BJ (cell line): ENCODE measurements at regions of chr9 and their contacts with region 1.

Region 1: GRCh38 chr9:112029921-112030444 is 133.4 kb downstream of the UGCG start:
- DNase-seq: peak; percentile 51
- H3K4me3 ChIP-seq: no peak overlapping the region
- H3K27me3 ChIP-seq: no peaks in the 10 kb centered on the region
- CTCF ChIP-seq: no peak

Region 2: GRCh38 chr9:113221003-113221799 is 1191.2 kb after region 1 on chr9 and contains the starts of genes FKBP15 and SLC31A1:
- CTCF ChIA-PET with region 1: no interaction called
- POLR2A ChIA-PET with region 1: interaction called, 10 read pairs
- DNase-seq: peak; percentile 93
- H3K4me3 ChIP-seq: peak within 1 kb of the TSS; percentile 92
- H3K27me3 ChIP-seq: no peaks in the 10 kb centered on the region
- CTCF ChIP-seq: no peak
- polyA plus RNA-seq, gene FKBP15: 29.2 and 45.0 TPM in 2 replicates
- polyA plus RNA-seq, gene SLC31A1: 25.7 and 36.6 TPM in 2 replicates